MCF 10A (cell line): ENCODE measurements at regions of chr10 and their contacts with region 1.

Region 1: DNA sequence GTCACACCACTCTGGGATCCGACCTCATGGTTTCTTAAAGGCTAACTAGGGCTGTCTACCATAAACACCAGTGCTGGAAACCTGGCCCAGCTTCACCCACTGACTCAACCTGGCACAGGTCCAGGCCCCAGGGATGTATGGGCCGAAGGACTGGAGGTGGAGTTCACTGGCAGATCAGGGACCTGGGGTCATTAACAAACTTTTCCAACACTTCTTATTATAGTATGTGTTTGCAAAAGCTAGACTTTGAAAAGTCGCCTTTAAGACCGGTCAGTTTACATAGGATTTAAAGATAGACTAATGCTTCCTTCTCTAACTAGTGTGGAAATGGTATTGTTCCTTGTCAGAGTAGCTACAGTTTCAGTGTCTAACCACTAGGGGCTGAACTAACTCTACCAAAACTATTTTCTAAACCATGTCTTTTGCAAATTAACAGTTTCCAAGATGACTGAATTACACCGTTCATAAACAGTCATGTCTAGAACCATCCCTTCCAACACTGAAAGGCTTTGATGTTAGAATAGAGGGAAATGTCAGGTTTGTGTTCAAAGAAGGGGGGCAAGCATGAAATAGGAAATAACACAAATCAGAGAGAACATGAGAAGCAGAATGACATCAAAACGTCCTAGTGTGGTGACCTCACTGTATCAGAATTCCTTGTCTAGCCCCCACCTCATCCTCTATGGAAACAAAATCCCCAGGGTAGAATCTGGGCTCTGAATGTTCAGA is 29.7 kb downstream of the STN1 start:
- DNase-seq: peak; percentile 95
- H3K4me3 Mint-ChIP-seq: peak overlapping the region; percentile 1
- H3K27ac Mint-ChIP-seq: peak overlapping the region; percentile 73
- H3K4me1 Mint-ChIP-seq: peaks cover 23% of the 10 kb centered on the region
- H3K27me3 Mint-ChIP-seq: no peaks in the 10 kb centered on the region
- CTCF ChIP-seq: peak; percentile 80

Region 2: DNA sequence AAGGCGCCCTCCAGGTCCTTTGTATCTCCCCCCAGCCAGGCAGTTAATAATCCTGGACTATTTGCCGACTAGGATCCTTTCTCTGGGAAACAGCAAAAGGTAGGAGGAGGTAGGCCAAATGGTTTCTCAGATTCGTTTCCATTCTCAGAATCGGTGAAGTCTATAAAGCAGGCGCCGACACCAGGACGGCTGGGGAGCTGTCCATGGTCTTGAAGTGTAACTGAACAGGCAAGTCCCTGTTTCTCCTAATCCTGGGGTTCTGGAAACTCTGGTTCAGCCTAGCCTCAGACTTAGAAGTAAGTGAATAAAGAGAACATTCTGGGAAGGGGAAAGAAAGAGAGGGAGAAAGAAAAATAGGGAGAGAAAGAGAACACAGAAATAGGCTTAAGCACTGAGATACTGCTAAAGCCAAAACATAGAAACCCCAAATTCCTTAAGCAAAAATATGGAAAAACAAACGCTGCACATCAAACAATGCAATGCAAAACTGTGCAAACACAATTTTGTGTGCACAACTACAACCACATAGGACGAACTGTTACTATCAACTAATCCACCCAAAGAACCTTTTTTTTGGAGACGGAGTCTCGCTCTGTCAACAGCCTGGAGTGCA is 622.5 kb before region 1 on chr10:
- CTCF ChIA-PET with region 1: no interaction called
- POLR2A ChIA-PET with region 1: no interaction called
- intact Hi-C with region 1: no loop called
- DNase-seq: peak; percentile 70
- H3K4me3 Mint-ChIP-seq: no peak overlapping the region
- H3K27ac Mint-ChIP-seq: no peak overlapping the region
- H3K4me1 Mint-ChIP-seq: no peaks in the 10 kb centered on the region
- H3K27me3 Mint-ChIP-seq: peaks cover 40% of the 10 kb centered on the region
- CTCF ChIP-seq: no peak

Region 3: GRCh38 chr10:103598654-103599115 is 289.6 kb before region 1 on chr10:
- CTCF ChIA-PET with region 1: interaction called, 3 read pairs
- POLR2A ChIA-PET with region 1: interaction called, 3 read pairs
- intact Hi-C with region 1: loop called (anchors 2 kb)
- DNase-seq: peak; percentile 77
- H3K4me3 Mint-ChIP-seq: no peak overlapping the region
- H3K27ac Mint-ChIP-seq: no peak overlapping the region
- H3K4me1 Mint-ChIP-seq: peaks cover 6% of the 10 kb centered on the region
- H3K27me3 Mint-ChIP-seq: no peaks in the 10 kb centered on the region
- CTCF ChIP-seq: peak; percentile 69

Region 4: GRCh38 chr10:103808780-103809179 is 79.5 kb before region 1 on chr10:
- CTCF ChIA-PET with region 1: no interaction called
- POLR2A ChIA-PET with region 1: no interaction called
- intact Hi-C with region 1: no loop called
- DNase-seq: no peak
- H3K4me3 Mint-ChIP-seq: no peak overlapping the region
- H3K27ac Mint-ChIP-seq: no peak overlapping the region
- H3K4me1 Mint-ChIP-seq: no peaks in the 10 kb centered on the region
- H3K27me3 Mint-ChIP-seq: no peaks in the 10 kb centered on the region
- CTCF ChIP-seq: no peak

Region 5: DNA sequence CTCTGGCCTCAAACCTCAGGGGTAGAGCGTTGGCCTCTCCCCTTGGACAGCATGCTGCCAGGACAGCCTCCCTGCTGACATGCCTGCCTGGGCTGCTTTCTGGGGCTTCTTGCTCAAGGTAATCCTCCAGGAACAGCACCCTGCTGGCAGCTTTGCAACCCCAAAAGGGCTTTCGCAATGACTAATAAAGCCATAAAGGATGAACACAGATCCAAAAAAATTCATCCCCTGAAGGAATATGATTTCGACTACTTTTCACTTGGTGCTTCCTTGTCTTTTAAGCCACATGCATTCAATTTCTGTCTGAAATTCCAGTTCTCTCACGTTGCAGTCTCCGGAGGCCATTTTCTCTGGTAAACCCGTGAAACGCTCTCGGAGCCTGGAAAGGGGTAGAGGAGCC is 17.8 kb before region 1 on chr10:
- CTCF ChIA-PET with region 1: interaction called, 106 read pairs
- POLR2A ChIA-PET with region 1: interaction called, 315 read pairs
- intact Hi-C with region 1: no loop called
- DNase-seq: peak; percentile 97
- H3K4me3 Mint-ChIP-seq: peak overlapping the region; percentile 70
- H3K27ac Mint-ChIP-seq: peak overlapping the region; percentile 97
- H3K4me1 Mint-ChIP-seq: peaks cover 29% of the 10 kb centered on the region
- H3K27me3 Mint-ChIP-seq: no peaks in the 10 kb centered on the region
- CTCF ChIP-seq: no peak

Region 6: DNA sequence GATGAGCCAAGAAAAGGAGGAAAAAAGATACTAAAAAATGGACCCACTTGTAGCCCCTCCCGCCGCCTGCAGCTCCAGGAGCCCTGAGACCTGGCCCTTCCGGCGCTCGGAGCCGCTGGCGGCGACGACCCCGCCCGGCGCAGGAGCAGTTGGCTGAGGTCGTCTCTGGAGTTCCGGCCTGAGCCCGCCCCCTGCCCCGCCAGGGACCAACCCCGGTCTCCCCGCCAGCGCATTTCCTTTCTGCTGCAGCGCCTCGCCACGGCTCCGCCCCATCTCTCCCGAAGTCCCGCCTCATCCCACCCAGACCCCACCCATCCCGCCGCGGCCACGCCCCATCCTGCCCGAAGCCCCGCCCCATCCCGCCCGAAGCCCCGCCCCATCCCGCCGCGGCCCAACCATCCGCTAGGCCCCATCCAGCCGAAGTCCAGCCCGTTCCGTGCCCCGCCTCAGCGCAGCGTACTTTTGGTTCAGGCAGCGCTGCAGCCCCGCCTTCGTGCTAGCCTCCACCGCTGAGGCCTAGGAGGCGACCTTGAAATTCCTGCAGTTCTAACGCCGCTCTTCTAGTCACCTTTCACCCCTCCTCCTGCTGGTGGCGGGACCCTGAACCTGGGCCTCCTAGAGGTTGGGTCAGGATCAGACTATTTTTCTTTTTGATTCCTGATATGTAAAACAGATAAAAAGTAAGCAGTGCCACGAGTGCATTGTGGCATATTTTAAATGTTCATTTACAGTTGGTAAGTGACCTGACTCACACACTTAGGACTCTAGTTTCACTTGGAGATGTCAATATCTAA is 30.0 kb after region 1 on chr10 and contains the start of gene STN1:
- CTCF ChIA-PET with region 1: interaction called, 8 read pairs
- POLR2A ChIA-PET with region 1: interaction called, 62 read pairs
- intact Hi-C with region 1: loop called (anchors 1 kb)
- DNase-seq: peak; percentile 94
- H3K4me3 Mint-ChIP-seq: peak within 1 kb of the TSS; percentile 89
- H3K27ac Mint-ChIP-seq: peak within 1 kb of the TSS; percentile 71
- H3K4me1 Mint-ChIP-seq: no peaks in the 10 kb centered on the region
- H3K27me3 Mint-ChIP-seq: no peaks in the 10 kb centered on the region
- CTCF ChIP-seq: no peak
- total RNA-seq, gene STN1: 31.8 and 46.7 TPM in 2 replicates

Region 7: DNA sequence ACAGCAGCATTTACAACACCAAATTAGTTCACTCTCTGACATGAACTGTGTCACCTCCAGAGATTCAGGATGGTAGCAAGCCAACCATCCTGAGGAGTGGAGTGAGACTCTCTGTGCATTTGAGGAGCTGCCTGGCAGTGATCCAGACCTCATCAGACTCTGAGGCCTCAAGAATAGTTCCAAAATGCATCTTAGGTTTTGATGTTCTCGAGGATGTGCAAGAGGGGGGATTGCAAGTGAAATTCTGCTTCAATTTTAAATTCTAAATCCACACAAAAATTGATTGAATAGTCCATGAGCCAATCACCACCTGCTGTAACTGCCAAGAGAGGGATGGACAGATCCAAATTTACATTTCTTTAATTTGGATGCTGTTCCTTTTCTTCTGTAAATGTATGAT is 128.4 kb after region 1 on chr10:
- CTCF ChIA-PET with region 1: interaction called, 10 read pairs
- POLR2A ChIA-PET with region 1: interaction called, 8 read pairs
- intact Hi-C with region 1: loop called (anchors 2 kb)
- DNase-seq: no peak
- H3K4me3 Mint-ChIP-seq: no peak overlapping the region
- H3K27ac Mint-ChIP-seq: no peak overlapping the region
- H3K4me1 Mint-ChIP-seq: no peaks in the 10 kb centered on the region
- H3K27me3 Mint-ChIP-seq: no peaks in the 10 kb centered on the region
- CTCF ChIP-seq: no peak

Region 8: DNA sequence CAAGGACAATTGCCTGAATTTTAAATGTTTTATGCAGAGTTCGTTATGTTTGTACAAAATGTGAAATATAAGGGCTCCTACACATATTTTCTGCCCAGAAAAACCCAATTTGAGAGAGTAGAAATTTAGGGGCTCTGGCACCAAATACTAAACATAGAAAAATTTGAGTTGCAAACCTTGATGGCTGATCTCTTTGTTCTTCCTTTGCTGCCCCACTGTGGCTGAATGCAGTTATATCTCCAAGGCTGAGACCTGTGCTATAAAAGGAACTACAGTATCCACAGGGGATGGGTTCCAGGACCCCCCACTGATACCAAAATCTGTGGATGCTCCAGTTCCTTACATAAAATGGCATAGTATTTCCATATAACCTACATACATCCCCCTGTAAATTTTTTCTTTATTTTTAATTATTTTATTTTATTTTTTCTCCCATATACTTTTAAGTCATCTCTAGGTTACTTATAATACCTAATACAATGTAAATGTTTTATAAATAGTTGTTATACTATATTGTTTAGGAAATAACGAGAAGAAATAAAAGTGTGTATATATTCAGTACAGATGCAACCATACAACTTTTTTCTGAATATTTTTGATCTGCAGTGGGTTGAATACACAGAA is 321.4 kb after region 1 on chr10:
- CTCF ChIA-PET with region 1: interaction called, 3 read pairs
- POLR2A ChIA-PET with region 1: no interaction called
- intact Hi-C with region 1: loop called (anchors 1 kb)
- DNase-seq: peak; percentile 62
- H3K4me3 Mint-ChIP-seq: no peak overlapping the region
- H3K27ac Mint-ChIP-seq: no peak overlapping the region
- H3K4me1 Mint-ChIP-seq: no peaks in the 10 kb centered on the region
- H3K27me3 Mint-ChIP-seq: no peaks in the 10 kb centered on the region
- CTCF ChIP-seq: peak; percentile 65

Region 9: GRCh38 chr10:105727131-105727530 is 1838.9 kb after region 1 on chr10:
- CTCF ChIA-PET with region 1: no interaction called
- POLR2A ChIA-PET with region 1: no interaction called
- intact Hi-C with region 1: no loop called
- DNase-seq: no peak
- H3K4me3 Mint-ChIP-seq: no peak overlapping the region
- H3K27ac Mint-ChIP-seq: no peak overlapping the region
- H3K4me1 Mint-ChIP-seq: no peaks in the 10 kb centered on the region
- H3K27me3 Mint-ChIP-seq: no peaks in the 10 kb centered on the region
- CTCF ChIP-seq: no peak